HepG2 (cell line): ENCODE measurements at regions of chr1 and their contacts with region 1.

Region 1: GRCh38 chr1:3340548-3341235 is 113.8 kb upstream of the ARHGEF16 start:
- DNase-seq: peak; percentile 79
- ATAC-seq: peak; percentile 71
- H3K4me3 ChIP-seq: peak overlapping the region in 1 of 3 experiments; percentile 41; a peak in 2 of 6 replicates
- H3K27ac ChIP-seq: peak overlapping the region; percentile 94
- H3K4me1 ChIP-seq: peaks cover 77% of the 10 kb centered on the region
- H3K27me3 ChIP-seq: no peaks in the 10 kb centered on the region
- CTCF ChIP-seq: peak; percentile 3; the same call in 1 of the 2 replicates
- EP300 ChIP-seq: peak in 1 of 2 experiments; percentile 85; a peak in 2 of 4 replicates
- POLR2A ChIP-seq: no peak
- RAD21 ChIP-seq: no peak

Region 2: DNA sequence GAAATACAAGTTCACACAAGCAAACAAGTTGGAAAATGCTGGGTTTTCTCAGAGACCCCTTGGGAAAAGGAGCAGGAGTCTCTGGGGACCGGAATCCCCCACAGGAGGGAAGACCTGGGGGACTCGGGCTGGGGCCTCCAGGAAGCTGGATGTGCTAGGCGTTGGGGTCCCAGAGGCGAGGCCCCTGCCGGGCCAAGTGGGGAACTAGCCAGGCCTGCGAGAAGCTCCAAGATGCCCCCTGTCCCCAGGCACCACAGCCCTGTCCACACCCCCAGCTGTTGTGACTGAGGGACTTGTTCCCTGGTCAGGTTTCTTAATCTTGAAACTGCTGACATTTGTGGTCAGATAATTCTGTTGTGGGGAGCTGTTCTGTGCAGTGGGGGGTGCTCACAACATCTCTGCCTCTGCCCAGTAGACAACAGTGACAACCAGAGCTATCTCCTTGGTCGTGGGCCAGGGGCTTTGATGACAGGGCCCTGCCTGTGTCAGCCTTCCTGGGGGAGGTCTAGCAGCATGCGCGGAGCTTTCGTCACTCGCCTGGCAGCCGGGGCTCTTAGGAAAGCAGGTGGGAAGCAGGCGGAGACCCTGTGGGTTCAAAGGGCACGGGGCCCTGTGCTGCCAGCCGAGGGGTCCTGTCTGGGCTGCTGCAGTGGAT is 12.6 kb before region 1 on chr1:
- CTCF ChIA-PET with region 1: no interaction called
- POLR2A ChIA-PET with region 1: interaction called, 35 read pairs
- in situ Hi-C with region 1: no loop called
- intact Hi-C with region 1: no loop called
- DNase-seq: peak; percentile 44
- ATAC-seq: no peak
- H3K4me3 ChIP-seq: no peak overlapping the region
- H3K27ac ChIP-seq: peak overlapping the region; percentile 81
- H3K4me1 ChIP-seq: peaks cover 100% of the 10 kb centered on the region
- H3K27me3 ChIP-seq: no peaks in the 10 kb centered on the region; a peak in 1 of 5 replicates
- CTCF ChIP-seq: no peak
- EP300 ChIP-seq: no peak; a peak in 1 of 4 replicates
- POLR2A ChIP-seq: no peak
- RAD21 ChIP-seq: no peak